ENCODE measurements at regions of chr5 and their contacts with region 1.

Region 1: DNA sequence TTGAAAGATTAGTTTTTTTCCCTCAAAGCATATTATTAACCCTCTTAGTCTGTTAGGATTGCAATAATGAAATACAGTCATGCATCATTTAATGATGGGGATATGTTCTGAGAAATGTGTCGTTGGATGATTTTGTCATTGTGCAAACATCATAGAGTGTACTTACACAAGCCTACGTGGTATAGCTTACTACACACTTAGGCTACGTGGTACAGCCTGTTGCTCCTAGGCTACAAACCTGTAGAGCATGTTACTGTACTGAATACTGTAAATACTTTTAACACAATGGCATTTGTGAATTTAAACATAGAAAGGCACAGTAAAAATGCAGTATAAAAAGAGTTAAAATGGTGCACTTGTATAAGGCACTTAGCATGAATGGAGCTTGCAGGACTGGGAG is 132.7 kb downstream of the PDE8B start:
- DNase-seq: no peak
- H3K4me3 ChIP-seq: no peak overlapping the region
- H3K27ac ChIP-seq: no peak overlapping the region
- H3K4me1 ChIP-seq: no peaks in the 10 kb centered on the region
- H3K27me3 ChIP-seq: no peaks in the 10 kb centered on the region
- CTCF ChIP-seq: no peak

Region 2: DNA sequence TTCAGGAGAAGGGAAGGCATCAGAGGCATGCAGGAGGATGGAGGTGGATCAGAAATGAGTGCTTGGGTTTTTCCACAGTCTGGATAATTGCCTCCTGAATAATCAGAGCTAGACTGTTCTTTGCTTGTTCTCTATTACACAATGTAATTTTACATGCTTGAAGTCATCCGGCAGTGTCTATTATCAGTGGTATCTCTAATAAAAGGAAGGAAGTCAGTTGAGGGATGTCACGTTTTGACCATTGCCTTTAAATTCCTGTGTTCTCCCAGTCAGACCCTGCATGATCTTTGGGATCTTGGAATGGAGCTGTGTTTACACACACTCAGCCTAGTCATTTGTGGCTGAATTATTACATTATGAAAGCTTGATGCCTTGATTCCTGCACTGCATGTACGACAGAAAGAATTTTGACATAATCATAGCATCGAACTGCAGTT is 41.7 kb before region 1 on chr5:
- dilution Hi-C with region 1: loop called (anchors 5 kb)
- DNase-seq: no peak
- H3K4me3 ChIP-seq: no peak overlapping the region
- H3K27ac ChIP-seq: no peak overlapping the region
- H3K4me1 ChIP-seq: no peaks in the 10 kb centered on the region
- H3K27me3 ChIP-seq: peaks cover 11% of the 10 kb centered on the region
- CTCF ChIP-seq: no peak